ENCODE measurements at regions of chr6 and their contacts with region 1.

Region 1: DNA sequence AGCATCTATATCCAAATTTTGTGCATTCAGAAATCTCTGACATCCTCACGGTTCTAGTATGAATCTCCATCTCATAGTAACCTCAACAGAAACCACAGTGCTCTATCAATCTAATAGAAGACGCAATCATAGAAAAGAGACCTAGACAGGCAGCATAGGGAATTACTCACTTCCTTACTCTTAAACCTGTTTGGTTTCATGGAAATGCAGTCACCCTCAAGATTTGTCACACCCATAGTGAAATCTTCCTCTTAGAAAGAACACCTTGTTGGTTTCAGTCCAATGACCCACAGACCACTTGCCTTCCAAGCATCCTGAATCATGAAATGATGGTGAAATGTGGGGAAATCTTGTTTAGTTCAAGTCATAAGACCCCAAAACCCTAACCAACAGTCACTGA is 166.1 kb upstream of the PRDM1 start:
- DNase-seq: no peak
- H3K4me3 Mint-ChIP-seq: no peak overlapping the region
- H3K27ac Mint-ChIP-seq: no peak overlapping the region
- H3K4me1 Mint-ChIP-seq: peaks cover 30% of the 10 kb centered on the region
- H3K27me3 Mint-ChIP-seq: peaks cover 3% of the 10 kb centered on the region

Region 2: DNA sequence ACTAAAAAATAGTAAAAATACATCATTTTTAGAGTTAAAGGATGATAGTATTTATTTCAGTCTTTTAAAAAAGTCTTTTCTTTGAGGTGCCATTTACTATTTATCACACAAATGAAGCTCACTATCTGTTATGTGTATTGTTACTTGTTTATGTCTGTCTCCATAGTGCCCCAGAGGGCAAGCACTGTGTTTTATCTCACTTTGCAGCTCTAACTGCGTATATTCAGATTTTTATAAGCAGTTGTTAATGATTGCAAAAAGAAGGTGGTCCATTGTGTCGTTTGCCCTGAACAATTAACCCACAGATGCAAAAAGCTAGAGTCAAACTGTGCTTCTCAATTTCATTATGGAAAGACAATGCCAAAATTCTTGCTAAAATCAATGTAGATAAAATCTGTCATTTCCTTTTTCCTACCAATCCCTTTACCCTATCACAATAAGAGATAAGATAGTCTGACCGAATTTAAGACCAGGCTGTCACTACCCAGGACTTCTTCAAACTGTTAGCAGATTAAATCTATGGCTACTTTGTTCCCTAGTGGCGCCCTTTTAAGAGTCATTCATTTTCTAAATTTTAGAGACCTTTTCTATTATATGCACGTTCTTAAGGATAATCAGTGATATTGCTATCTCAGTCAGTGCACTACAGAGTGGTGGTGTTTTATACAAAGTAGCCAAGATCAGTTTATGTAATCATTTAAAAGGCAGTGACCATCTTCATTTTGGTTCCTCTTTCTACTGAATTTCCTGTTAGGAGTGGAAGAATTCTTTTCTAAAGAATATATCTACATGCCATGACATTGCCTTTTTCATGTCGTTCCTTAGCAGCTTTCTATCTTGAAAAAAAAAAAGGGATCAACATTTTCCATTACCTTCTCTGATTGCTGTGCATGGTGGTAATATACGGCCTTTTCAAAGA is 33.0 kb after region 1 on chr6:
- intact Hi-C with region 1: loop called (anchors 5 kb)
- DNase-seq: no peak
- H3K4me3 Mint-ChIP-seq: no peak overlapping the region
- H3K27ac Mint-ChIP-seq: no peak overlapping the region
- H3K4me1 Mint-ChIP-seq: peaks cover 10% of the 10 kb centered on the region
- H3K27me3 Mint-ChIP-seq: peaks cover 1% of the 10 kb centered on the region

Measured in activated T-helper 1 cell treated with anti-CD3 and anti-CD28 coated beads, Interleukin-12 subunit alpha, Interleukin-12 subunit beta, Interleukin-2, Interleukin-4 antibody, amounts not matched to agents 30 ng/mL and 10 ng/mL and 1 ng/mL, durations not matched to agents 14 hours and 24 hours and 36 hours (primary cell).